ENCODE measurements at regions of chr11 and their contacts with region 1.

Region 1: GRCh38 chr11:45209891-45210699 is 63.7 kb downstream of the PRDM11 start:
- DNase-seq: peak in 1 of 2 experiments; percentile 70
- H3K4me3 ChIP-seq: no peak overlapping the region
- H3K27ac ChIP-seq: no peak overlapping the region
- H3K4me1 ChIP-seq: peaks cover 3 to 22% (median 14%) of the 10 kb centered on the region in 4 experiments
- H3K27me3 ChIP-seq: no peaks in the 10 kb centered on the region
- CTCF ChIP-seq: no peak
- EP300 ChIP-seq: peak; percentile 66 to 89; a peak in 1 of 3 replicates
- POLR2A ChIP-seq: peak in 1 of 2 experiments; percentile 39; a peak in 1 of 3 replicates
- RAD21 ChIP-seq: no peak

Region 2: GRCh38 chr11:44823006-44823405 is 387.1 kb before region 1 on chr11:
- CTCF ChIA-PET with region 1: no interaction called
- POLR2A ChIA-PET with region 1: no interaction called
- DNase-seq: peak in 1 of 2 experiments; percentile 57
- H3K4me3 ChIP-seq: 0 out of 8 replicates have a peak overlapping the region, but pooled peaks of 1 of the 4 experiments have one; percentile 31
- H3K27ac ChIP-seq: no peak overlapping the region
- H3K4me1 ChIP-seq: peaks cover 11 to 32% (median 21%) of the 10 kb centered on the region in 4 experiments
- H3K27me3 ChIP-seq: peaks cover 0 to 25% (median 10%) of the 10 kb centered on the region in 4 experiments; a peak in 5 of 7 replicates
- CTCF ChIP-seq: peak; percentile 73 to 99 (median 93)
- EP300 ChIP-seq: no peak
- POLR2A ChIP-seq: no peak
- RAD21 ChIP-seq: peak; percentile 64 to 74

Region 3: GRCh38 chr11:45180179-45180842 is 29.8 kb before region 1 on chr11:
- CTCF ChIA-PET with region 1: interaction called, 9 read pairs
- POLR2A ChIA-PET with region 1: interaction called, 10 read pairs
- DNase-seq: peak in 1 of 2 experiments; percentile 81
- H3K4me3 ChIP-seq: peak overlapping the region; percentile 43 to 69 (median 46)
- H3K27ac ChIP-seq: no peak overlapping the region
- H3K4me1 ChIP-seq: peaks cover 0 to 17% (median 11%) of the 10 kb centered on the region in 4 experiments; a peak in 6 of 7 replicates
- H3K27me3 ChIP-seq: no peaks in the 10 kb centered on the region
- CTCF ChIP-seq: peak in 2 of 3 experiments; percentile 30 to 32; a peak in 2 of 4 replicates
- EP300 ChIP-seq: no peak
- POLR2A ChIP-seq: no peak
- RAD21 ChIP-seq: no peak

Region 4: GRCh38 chr11:45193695-45194094 is 16.4 kb before region 1 on chr11:
- CTCF ChIA-PET with region 1: interaction called, 10 read pairs
- POLR2A ChIA-PET with region 1: interaction called, 3 read pairs
- DNase-seq: no peak
- H3K4me3 ChIP-seq: no peak overlapping the region
- H3K27ac ChIP-seq: no peak overlapping the region
- H3K4me1 ChIP-seq: no peaks in the 10 kb centered on the region
- H3K27me3 ChIP-seq: no peaks in the 10 kb centered on the region
- CTCF ChIP-seq: no peak
- EP300 ChIP-seq: no peak
- POLR2A ChIP-seq: no peak
- RAD21 ChIP-seq: no peak

Region 5: DNA sequence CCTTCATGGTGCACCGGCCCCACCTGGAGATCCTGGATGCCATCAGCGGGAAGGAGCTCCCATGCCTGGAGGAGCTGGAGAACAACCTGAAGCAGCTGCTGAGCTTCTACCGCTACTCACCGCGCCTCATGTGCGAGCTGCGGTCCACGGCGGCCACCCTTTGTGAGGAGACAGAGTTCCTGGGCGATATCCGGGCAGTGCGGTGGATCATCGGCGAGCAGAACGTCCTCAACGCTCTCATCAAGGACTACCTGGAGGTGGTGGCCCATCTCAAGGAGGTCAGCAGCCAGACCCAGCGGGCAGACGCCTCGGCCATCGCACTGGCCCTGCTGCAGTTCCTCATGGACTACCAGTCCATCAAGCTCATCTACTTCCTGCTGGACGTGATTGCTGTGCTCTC is 16.8 kb after region 1 on chr11:
- CTCF ChIA-PET with region 1: interaction called, 13 read pairs
- POLR2A ChIA-PET with region 1: no interaction called
- DNase-seq: no peak
- H3K4me3 ChIP-seq: no peak overlapping the region
- H3K27ac ChIP-seq: no peak overlapping the region
- H3K4me1 ChIP-seq: no peaks in the 10 kb centered on the region
- H3K27me3 ChIP-seq: no peaks in the 10 kb centered on the region; a peak in 1 of 7 replicates
- CTCF ChIP-seq: no peak
- EP300 ChIP-seq: no peak
- POLR2A ChIP-seq: no peak
- RAD21 ChIP-seq: no peak

Region 6: GRCh38 chr11:45233121-45233803 is 23.2 kb after region 1 on chr11:
- CTCF ChIA-PET with region 1: interaction called, 49 read pairs
- POLR2A ChIA-PET with region 1: no interaction called
- DNase-seq: peak; percentile 53 to 94
- H3K4me3 ChIP-seq: peak overlapping the region in 1 of 4 experiments; percentile 22; a peak in 1 of 8 replicates
- H3K27ac ChIP-seq: no peak overlapping the region
- H3K4me1 ChIP-seq: peaks cover 0 to 4% (median 2%) of the 10 kb centered on the region in 4 experiments; a peak in 2 of 7 replicates
- H3K27me3 ChIP-seq: no peaks in the 10 kb centered on the region
- CTCF ChIP-seq: peak; percentile 73 to 98 (median 94)
- EP300 ChIP-seq: no peak
- POLR2A ChIP-seq: no peak
- RAD21 ChIP-seq: peak; percentile 52 to 59

Region 7: DNA sequence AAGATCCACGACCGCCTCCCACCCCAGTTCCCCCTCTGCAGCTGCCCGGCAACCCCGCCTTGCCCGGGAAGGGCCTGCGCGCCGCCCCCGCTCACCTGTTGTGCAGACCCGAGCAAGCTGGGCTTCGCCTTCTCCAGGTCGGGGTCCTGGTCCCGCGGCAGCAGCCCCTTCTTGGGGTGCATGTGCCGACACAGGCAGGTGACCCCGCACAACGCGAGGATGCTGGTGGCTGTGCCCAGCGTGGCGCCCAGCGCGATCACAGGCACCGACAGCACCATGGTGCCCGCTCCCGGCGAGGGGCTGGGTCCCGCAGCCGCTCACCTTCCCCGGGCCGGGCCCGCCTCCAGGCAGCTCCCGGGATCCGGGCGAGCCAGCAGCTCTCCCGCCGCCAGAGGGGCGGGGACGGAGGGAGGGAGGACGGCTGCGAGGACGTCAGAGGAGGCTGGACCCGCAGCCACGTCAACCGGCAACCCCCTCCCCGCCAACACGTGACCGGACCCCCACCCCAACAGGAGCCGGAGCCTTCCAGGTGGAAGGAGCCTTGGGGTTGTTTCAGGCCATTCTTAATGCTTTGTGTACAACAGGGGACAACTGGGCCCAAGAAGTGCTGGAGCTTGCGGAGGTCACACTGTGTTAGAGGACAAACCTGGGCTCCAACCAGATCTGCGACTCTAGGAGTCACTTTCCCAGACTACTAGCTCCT is 76.0 kb after region 1 on chr11 and contains the start of gene SYT13:
- CTCF ChIA-PET with region 1: interaction called, 11 read pairs
- POLR2A ChIA-PET with region 1: no interaction called
- DNase-seq: peak; percentile 54 to 88
- H3K4me3 ChIP-seq: peak within 1 kb of the TSS; percentile 63 to 80 (median 70)
- H3K27ac ChIP-seq: no peak within 1 kb of the TSS
- H3K4me1 ChIP-seq: peaks cover 0 to 9% (median 3%) of the 10 kb centered on the region in 4 experiments; a peak in 5 of 7 replicates
- H3K27me3 ChIP-seq: peaks cover 2 to 18% (median 14%) of the 10 kb centered on the region in 4 experiments
- CTCF ChIP-seq: no peak
- EP300 ChIP-seq: no peak
- POLR2A ChIP-seq: peak in 1 of 2 experiments; percentile 49; a peak in 2 of 3 replicates
- RAD21 ChIP-seq: no peak
- total RNA-seq, gene SYT13: 12.3 and 13.2 TPM in 2 replicates

Region 8: GRCh38 chr11:45305874-45306623 is 96.0 kb after region 1 on chr11:
- CTCF ChIA-PET with region 1: no interaction called
- POLR2A ChIA-PET with region 1: no interaction called
- DNase-seq: no peak
- H3K4me3 ChIP-seq: no peak overlapping the region
- H3K27ac ChIP-seq: no peak overlapping the region
- H3K4me1 ChIP-seq: no peaks in the 10 kb centered on the region
- H3K27me3 ChIP-seq: no peaks in the 10 kb centered on the region
- CTCF ChIP-seq: no peak
- EP300 ChIP-seq: no peak
- POLR2A ChIP-seq: no peak
- RAD21 ChIP-seq: no peak

Measured in H1 (cell line).